A673 (cell line): ENCODE measurements at regions of chr6 and their contacts with region 1.

Region 1: DNA sequence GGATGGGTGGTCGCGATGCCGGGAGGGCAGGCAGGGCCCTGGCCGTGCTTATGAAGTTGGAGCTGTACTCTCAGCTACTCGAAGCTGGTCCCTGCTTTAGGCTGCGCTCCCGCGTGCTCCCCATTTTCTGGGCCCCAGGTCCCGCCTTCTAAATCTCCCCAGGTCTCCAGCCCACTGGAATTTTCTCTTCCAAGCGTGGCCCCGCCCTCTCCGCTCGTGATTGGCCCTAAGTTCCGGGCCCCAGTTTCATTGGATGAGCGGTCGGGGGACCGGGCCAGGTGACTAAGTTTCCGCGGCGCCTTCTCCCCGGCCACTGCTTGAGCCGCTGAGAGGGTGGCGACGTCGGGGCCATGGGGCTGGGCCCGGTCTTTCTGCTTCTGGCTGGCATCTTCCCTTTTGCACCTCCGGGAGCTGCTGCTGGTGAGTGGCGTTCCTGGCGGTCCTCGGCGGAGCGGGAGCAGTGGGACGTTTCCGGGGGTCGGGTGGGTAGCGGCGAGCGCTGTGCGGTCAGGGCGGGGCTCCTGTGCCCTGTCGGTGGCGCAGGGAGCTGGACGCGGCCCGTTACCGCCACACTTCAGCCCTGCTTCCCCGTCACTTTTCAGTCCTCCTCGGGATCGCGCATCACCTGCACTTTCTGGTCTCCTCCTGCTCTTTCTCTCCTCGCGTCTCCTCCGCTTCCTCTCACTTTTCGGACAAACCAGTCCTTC is at the start of gene MICA:
- DNase-seq: peak; percentile 94
- H3K4me3 ChIP-seq: peak within 1 kb of the TSS; percentile 73
- H3K27ac ChIP-seq: peak within 1 kb of the TSS; percentile 76
- H3K4me1 ChIP-seq: peaks cover 22% of the 10 kb centered on the region
- H3K27me3 ChIP-seq: no peaks in the 10 kb centered on the region
- CTCF ChIP-seq: no peak
- total RNA-seq, gene MICA: 31.6 and 41.2 TPM in 2 replicates

Region 2: GRCh38 chr6:31321820-31322219 is 81.6 kb before region 1 on chr6:
- CTCF ChIA-PET with region 1: no interaction called
- POLR2A ChIA-PET with region 1: no interaction called
- intact Hi-C with region 1: no loop called
- DNase-seq: no peak
- H3K4me3 ChIP-seq: no peak overlapping the region
- H3K27ac ChIP-seq: no peak overlapping the region
- H3K4me1 ChIP-seq: no peaks in the 10 kb centered on the region
- H3K27me3 ChIP-seq: peaks cover 79% of the 10 kb centered on the region
- CTCF ChIP-seq: no peak

Region 3: GRCh38 chr6:31441365-31442267 is 38.2 kb after region 1 on chr6:
- CTCF ChIA-PET with region 1: interaction called, 4 read pairs
- POLR2A ChIA-PET with region 1: no interaction called
- intact Hi-C with region 1: loop called (anchors 2 kb)
- DNase-seq: peak; percentile 67
- H3K4me3 ChIP-seq: no peak overlapping the region
- H3K27ac ChIP-seq: no peak overlapping the region
- H3K4me1 ChIP-seq: no peaks in the 10 kb centered on the region
- H3K27me3 ChIP-seq: peaks cover 18% of the 10 kb centered on the region
- CTCF ChIP-seq: peak; percentile 92

Region 4: GRCh38 chr6:31493875-31494694 is 90.6 kb after region 1 on chr6:
- CTCF ChIA-PET with region 1: no interaction called
- POLR2A ChIA-PET with region 1: no interaction called
- intact Hi-C with region 1: loop called (anchors 5 kb)
- DNase-seq: peak; percentile 91
- H3K4me3 ChIP-seq: peak overlapping the region; percentile 78
- H3K27ac ChIP-seq: peak overlapping the region; percentile 64
- H3K4me1 ChIP-seq: peaks cover 7% of the 10 kb centered on the region
- H3K27me3 ChIP-seq: no peaks in the 10 kb centered on the region
- CTCF ChIP-seq: peak; percentile 98

Region 5: GRCh38 chr6:31776989-31777666 is 373.7 kb after region 1 on chr6 and contains the start of gene VWA7:
- CTCF ChIA-PET with region 1: no interaction called
- POLR2A ChIA-PET with region 1: no interaction called
- intact Hi-C with region 1: no loop called
- DNase-seq: peak; percentile 59
- H3K4me3 ChIP-seq: no peak within 1 kb of the TSS
- H3K27ac ChIP-seq: peak within 1 kb of the TSS; percentile 47
- H3K4me1 ChIP-seq: peaks cover 11% of the 10 kb centered on the region
- H3K27me3 ChIP-seq: no peaks in the 10 kb centered on the region
- CTCF ChIP-seq: no peak
- total RNA-seq, gene VWA7: 2.7 and 2.8 TPM in 2 replicates